ENCODE measurements at regions of chr2 and their contacts with region 1.

Region 1: GRCh38 chr2:178414266-178415247 is 36.4 kb downstream of the PRKRA start:
- DNase-seq: peak; percentile 92
- H3K4me3 ChIP-seq: peak overlapping the region; percentile 45 to 50
- H3K27ac ChIP-seq: peak overlapping the region; percentile 90
- H3K4me1 ChIP-seq: peaks cover 2% of the 10 kb centered on the region
- H3K27me3 ChIP-seq: no peaks in the 10 kb centered on the region
- CTCF ChIP-seq: peak; percentile 58 to 89 (median 86)
- POLR2A ChIP-seq: no peak

Region 2: DNA sequence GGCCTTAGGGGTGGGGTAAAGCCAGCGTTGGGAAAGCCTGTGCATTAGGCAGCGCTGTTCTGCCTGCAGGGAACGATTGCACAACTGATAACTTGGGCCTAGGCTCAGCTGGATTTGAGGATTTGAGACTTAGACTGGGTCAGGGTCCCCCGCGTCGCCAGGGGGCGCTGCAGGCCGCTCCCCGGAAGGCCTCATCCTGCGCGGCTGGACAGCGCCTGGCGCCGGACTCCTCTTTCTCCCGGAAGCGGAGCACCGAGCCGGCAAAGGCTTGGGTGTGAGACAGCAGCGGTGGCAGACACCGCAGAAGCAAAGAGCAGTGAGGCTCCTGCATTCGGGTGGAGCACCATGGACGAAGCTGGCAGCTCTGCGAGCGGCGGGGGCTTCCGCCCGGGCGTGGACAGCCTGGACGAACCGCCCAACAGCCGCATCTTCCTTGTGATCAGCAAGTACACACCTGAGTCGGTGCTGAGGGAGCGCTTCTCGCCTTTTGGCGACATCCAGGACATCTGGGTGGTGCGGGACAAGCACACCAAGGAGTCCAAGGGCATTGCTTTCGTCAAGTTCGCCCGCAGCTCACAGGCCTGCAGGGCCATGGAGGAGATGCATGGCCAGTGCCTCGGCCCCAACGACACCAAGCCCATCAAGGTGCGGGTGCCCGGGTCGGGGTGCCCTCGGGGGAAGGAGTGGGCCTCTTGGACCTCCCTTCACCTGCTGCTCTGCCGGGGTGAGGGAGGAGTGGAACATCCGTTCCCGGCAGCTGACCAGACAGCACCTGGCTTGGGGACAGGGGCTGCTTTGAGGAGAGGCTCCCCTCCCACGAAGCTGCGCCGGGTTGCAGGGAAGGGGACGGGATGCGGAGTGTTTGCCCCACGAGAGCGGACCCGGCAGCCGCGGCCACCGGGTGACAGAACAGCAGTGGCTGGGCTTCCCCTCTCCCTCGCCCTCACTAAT is 302.1 kb before region 1 on chr2 and contains the start of gene RBM45:
- intact Hi-C with region 1: loop called (anchors 5 kb)
- DNase-seq: peak; percentile 87
- H3K4me3 ChIP-seq: peak within 1 kb of the TSS; percentile 55 to 67
- H3K27ac ChIP-seq: peak within 1 kb of the TSS; percentile 64 to 71
- H3K4me1 ChIP-seq: no peaks in the 10 kb centered on the region
- H3K27me3 ChIP-seq: no peaks in the 10 kb centered on the region
- CTCF ChIP-seq: peak; percentile 75 to 99 (median 93)
- POLR2A ChIP-seq: peak; percentile 36
- total RNA-seq, gene RBM45: 9.7 to 19.0 TPM

Region 3: GRCh38 chr2:178128836-178129630 is 285.5 kb before region 1 on chr2:
- intact Hi-C with region 1: loop called (anchors 5 kb)
- DNase-seq: no peak
- H3K4me3 ChIP-seq: no peak overlapping the region
- H3K27ac ChIP-seq: no peak overlapping the region
- H3K4me1 ChIP-seq: no peaks in the 10 kb centered on the region
- H3K27me3 ChIP-seq: no peaks in the 10 kb centered on the region
- CTCF ChIP-seq: no peak
- POLR2A ChIP-seq: no peak

Region 4: DNA sequence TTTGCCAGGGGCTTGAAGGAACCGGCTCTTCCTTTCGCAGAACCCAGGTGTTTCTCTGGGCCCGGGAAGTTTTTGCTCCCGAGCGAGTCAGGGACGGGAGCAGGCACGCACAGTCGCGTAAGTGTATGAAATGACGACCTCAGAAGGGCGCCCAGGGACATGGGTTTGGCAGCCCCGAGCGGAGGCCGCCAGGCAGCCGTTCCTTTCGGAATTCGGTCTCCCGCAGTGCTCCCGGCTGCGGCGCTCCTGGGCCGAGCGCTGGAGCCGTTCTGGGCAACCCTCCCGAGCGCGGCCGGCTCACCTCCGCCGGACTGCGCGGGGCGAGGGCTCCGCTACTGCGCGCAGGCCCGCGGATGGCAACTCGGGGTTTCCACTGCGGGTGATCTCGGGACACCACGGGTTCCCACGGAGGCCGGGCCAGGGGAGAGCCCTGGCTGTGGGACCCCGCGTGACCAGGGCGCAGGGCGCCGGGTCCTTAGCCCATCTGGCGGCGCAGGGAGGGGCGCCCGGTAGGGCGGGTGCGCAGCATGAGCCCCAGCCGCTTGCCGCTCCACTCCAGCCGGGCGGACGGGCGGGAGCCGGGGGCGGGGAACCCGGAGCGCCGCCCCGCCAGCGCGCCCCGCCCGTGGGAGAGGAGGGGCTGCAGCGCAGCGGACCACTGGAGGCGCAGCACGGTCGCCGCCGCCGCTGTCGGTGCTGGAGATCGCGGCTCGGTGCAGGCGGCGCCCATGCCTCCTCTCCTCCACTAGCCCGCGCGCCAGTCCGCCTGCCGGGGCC is 220.5 kb before region 1 on chr2 and contains the start of gene OSBPL6:
- intact Hi-C with region 1: loop called (anchors 10 kb)
- DNase-seq: peak; percentile 81
- H3K4me3 ChIP-seq: peak within 1 kb of the TSS; percentile 60 to 74
- H3K27ac ChIP-seq: peak within 1 kb of the TSS; percentile 95
- H3K4me1 ChIP-seq: no peaks in the 10 kb centered on the region
- H3K27me3 ChIP-seq: no peaks in the 10 kb centered on the region
- CTCF ChIP-seq: peak in 2 of 4 experiments; percentile 58 to 70
- POLR2A ChIP-seq: peak; percentile 71
- total RNA-seq, gene OSBPL6: 2.4 to 10.8 TPM

Region 5: DNA sequence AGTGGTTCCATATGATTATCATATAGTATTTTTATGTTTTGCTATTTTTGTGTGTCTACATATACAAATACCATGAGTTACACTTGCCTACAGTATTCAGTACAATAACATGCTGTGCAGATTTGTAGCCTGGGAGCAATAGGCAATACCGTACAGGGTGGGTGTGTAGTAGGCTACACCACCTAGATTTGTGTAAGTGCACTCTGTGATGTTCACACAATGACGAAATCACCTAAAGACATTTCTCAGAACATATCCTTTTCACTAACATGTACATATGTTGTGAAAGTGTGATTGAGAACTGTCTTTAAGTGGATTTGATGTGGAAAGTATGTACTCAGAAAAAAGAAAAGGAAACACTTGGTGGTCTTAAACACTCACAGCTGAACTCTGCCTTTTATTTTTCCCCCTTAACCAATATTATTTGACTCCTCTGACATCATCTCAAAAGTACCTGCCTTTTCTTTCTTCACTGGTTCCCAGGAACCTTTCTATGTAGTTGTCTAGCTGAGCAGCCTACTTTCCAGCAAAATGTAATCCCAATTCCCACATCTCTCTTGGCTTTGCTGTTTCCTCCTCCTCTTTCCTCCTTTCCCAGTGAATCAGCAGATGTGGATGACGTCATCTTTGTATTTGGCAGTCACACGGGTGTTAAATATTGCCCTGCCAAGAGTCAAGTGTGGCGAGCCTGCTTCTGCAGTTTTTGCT is 172.6 kb before region 1 on chr2:
- intact Hi-C with region 1: no loop called
- DNase-seq: peak; percentile 29
- H3K4me3 ChIP-seq: no peak overlapping the region
- H3K27ac ChIP-seq: no peak overlapping the region
- H3K4me1 ChIP-seq: no peaks in the 10 kb centered on the region
- H3K27me3 ChIP-seq: no peaks in the 10 kb centered on the region
- CTCF ChIP-seq: no peak
- POLR2A ChIP-seq: no peak